PC-3 (cell line): ENCODE measurements at regions of chr15 and their contacts with region 1.

Region 1: DNA sequence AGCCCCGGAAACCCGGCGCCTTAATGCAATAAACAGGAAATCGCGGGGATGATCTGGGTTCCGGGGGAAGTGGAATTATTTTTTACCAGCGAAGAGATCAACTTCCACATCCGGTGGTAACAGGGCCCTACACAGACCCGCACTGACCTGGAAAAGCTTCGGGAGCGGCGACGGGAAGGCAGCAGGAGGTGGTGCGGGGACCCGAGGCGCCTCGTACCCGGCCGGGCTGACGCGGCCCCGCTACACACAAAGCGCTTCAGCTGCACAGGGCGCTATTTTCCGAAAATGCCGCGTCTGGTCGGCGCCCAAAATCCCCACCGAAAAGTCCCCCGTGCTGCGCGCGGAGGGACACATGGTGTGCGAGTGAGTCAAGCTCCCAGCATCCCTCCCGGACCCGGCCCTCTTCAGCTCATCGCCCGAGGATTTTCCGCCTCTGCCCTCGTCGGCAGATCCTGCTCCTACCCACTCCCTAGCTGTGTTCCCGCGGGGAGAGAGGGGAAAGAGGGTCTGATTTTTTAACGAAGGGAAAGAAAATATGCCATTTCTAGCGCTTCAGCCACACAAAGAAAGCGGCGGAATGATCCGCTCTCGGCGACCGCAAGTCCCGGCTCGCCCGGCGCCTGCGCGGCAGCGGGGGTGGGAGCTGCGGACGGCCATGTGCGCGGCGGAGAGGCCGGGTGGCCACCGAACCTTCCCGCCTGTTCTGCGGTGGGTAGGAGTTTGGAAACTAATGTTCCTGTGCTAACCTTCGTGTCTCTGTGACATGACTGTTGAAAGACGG is at the start of gene GABPB1:
- DNase-seq: peak; percentile 70
- ATAC-seq: peak; percentile 68
- H3K4me3 ChIP-seq: peak within 1 kb of the TSS; percentile 94
- H3K27ac ChIP-seq: peak within 1 kb of the TSS; percentile 94
- H3K4me1 ChIP-seq: peaks cover 29% of the 10 kb centered on the region
- H3K27me3 ChIP-seq: no peaks in the 10 kb centered on the region
- CTCF ChIP-seq: no peak
- total RNA-seq, gene GABPB1: 34.2 and 39.7 TPM in 2 replicates

Region 2: GRCh38 chr15:50424066-50424890 is 69.2 kb after region 1 on chr15 and contains the start of gene USP8:
- CTCF ChIA-PET with region 1: no interaction called
- POLR2A ChIA-PET with region 1: interaction called, 3 read pairs
- intact Hi-C with region 1: loop called (anchors 2 kb)
- DNase-seq: peak; percentile 96
- ATAC-seq: peak; percentile 95
- H3K4me3 ChIP-seq: peak within 1 kb of the TSS; percentile 91
- H3K27ac ChIP-seq: peak within 1 kb of the TSS; percentile 31
- H3K4me1 ChIP-seq: 0 out of 2 replicates have a peak, but pooled peaks cover 9% of the 10 kb centered on the region
- H3K27me3 ChIP-seq: no peaks in the 10 kb centered on the region
- CTCF ChIP-seq: no peak
- total RNA-seq, gene USP8: 24.6 and 25.1 TPM in 2 replicates

Region 3: GRCh38 chr15:50506121-50506520 is 151.1 kb after region 1 on chr15:
- CTCF ChIA-PET with region 1: no interaction called
- POLR2A ChIA-PET with region 1: interaction called, 10 read pairs
- intact Hi-C with region 1: loop called (anchors 10 kb)
- DNase-seq: no peak
- ATAC-seq: no peak
- H3K4me3 ChIP-seq: no peak overlapping the region
- H3K27ac ChIP-seq: no peak overlapping the region
- H3K4me1 ChIP-seq: no peaks in the 10 kb centered on the region
- H3K27me3 ChIP-seq: no peaks in the 10 kb centered on the region
- CTCF ChIP-seq: no peak

Region 4: GRCh38 chr15:50523851-50524251 is 168.8 kb after region 1 on chr15:
- CTCF ChIA-PET with region 1: no interaction called
- POLR2A ChIA-PET with region 1: no interaction called
- intact Hi-C with region 1: no loop called
- DNase-seq: no peak
- ATAC-seq: no peak
- H3K4me3 ChIP-seq: no peak overlapping the region
- H3K27ac ChIP-seq: no peak overlapping the region
- H3K4me1 ChIP-seq: no peaks in the 10 kb centered on the region
- H3K27me3 ChIP-seq: no peaks in the 10 kb centered on the region
- CTCF ChIP-seq: no peak